ENCODE measurements at regions of chr3 and their contacts with region 1.

Region 1: GRCh38 chr3:133821767-133822638 is 16.4 kb downstream of the SRPRB start:
- DNase-seq: peak; percentile 67

Region 2: GRCh38 chr3:133712017-133712416 is 110.0 kb before region 1 on chr3:
- intact Hi-C with region 1: no loop called
- DNase-seq: no peak

Region 3: DNA sequence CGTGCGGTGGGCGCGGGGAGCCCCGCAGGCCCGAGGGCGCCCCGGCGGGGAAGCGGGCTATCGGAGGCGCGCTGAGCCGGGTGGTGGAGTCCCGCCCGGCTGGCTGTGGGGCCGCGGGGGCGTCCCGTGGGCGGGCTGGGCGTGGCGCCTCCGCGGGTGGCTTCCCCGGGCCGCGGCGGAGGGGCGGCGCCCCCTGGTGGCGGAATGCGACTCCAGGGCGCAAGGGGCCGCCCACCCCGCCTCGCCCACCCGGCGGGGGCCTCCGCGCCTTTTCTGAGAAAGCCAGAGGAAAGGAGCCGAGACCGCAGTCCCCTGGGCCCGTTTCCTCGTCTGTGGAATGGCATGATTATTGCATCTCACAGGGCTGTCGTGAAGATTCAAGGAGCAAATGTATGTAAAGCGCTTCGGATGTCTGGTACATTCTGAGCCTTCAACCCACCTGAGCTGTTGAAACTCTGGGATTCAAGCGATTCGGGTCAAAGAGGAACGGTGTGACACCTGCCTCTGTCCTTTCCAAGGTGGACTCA is 105.6 kb after region 1 on chr3:
- intact Hi-C with region 1: loop called (anchors 1 kb)
- DNase-seq: no peak

Measured in cardiac septum (tissue), 1 donor.